ENCODE measurements at regions of chrX and their contacts with region 1.

Region 1: GRCh38 chrX:135476378-135476777 is 44.1 kb upstream of the INTS6L start:
- DNase-seq: no peak
- H3K4me3 ChIP-seq: no peak overlapping the region
- H3K27ac ChIP-seq: no peak overlapping the region
- H3K4me1 ChIP-seq: no peaks in the 10 kb centered on the region
- H3K27me3 ChIP-seq: no peaks in the 10 kb centered on the region
- CTCF ChIP-seq: no peak
- EP300 ChIP-seq: no peak
- POLR2A ChIP-seq: no peak
- RAD21 ChIP-seq: no peak

Region 2: DNA sequence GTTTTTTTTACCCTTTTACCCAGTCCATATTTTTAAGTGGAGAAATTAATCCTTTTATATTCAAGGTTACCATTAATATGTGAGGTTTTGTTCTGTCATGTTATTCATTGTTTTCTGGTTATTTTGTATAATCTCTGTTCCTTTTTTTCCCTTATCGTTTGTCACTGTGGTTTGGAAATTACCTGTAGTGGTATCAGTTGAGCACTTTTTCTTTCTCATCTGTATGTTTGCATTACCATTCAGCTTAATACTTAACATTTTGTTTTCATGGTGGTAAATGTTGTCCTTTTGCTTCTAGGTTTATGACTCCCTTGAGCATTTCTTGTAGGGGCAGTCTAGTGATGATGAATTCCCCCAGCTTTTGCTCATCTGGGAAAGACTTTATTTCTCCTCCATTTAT is 160.5 kb before region 1 on chrX:
- CTCF ChIA-PET with region 1: no interaction called
- POLR2A ChIA-PET with region 1: no interaction called
- DNase-seq: no peak
- H3K4me3 ChIP-seq: no peak overlapping the region
- H3K27ac ChIP-seq: no peak overlapping the region
- H3K4me1 ChIP-seq: no peaks in the 10 kb centered on the region
- H3K27me3 ChIP-seq: no peaks in the 10 kb centered on the region
- CTCF ChIP-seq: no peak
- EP300 ChIP-seq: no peak
- POLR2A ChIP-seq: no peak
- RAD21 ChIP-seq: no peak

Region 3: GRCh38 chrX:135327299-135327698 is 149.1 kb before region 1 on chrX:
- CTCF ChIA-PET with region 1: no interaction called
- POLR2A ChIA-PET with region 1: no interaction called
- DNase-seq: no peak
- H3K4me3 ChIP-seq: no peak overlapping the region
- H3K27ac ChIP-seq: no peak overlapping the region
- H3K4me1 ChIP-seq: peaks cover 0 to 5% (median under 1%) of the 10 kb centered on the region in 4 experiments; a peak in 2 of 7 replicates
- H3K27me3 ChIP-seq: no peaks in the 10 kb centered on the region
- CTCF ChIP-seq: no peak
- EP300 ChIP-seq: no peak
- POLR2A ChIP-seq: no peak
- RAD21 ChIP-seq: no peak

Region 4: DNA sequence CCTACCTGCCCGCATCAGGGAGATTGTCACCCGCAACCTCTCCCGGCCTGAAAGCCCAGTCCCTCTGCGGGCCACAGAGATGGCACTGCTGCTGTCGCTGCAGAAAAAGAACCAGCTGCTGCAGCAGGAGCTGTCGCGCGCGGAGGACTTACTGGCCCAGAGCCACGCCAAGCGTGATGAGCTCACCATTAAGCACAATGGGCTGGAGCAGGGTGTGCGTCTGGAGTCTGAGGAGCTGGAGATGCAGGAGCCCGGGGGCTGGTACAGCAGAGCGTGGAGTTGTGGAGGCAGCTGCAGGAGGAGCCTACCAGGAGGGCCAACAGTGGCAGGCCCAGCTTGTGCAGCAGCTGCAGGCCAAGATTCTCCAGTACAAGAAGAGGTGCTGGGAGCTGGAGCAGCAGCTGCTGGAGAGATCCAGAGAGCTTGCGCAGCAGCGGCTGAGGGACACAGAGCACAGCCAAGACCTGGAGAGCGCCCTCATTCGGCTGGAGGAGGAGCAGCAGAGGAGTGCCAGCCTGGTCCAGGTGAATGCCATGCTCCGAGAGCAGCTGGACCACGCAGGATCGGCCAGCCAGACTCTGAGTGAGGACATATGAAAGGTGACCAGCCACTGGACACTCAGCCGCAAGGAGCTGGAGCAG is 43.4 kb before region 1 on chrX:
- CTCF ChIA-PET with region 1: interaction called, 12 read pairs
- POLR2A ChIA-PET with region 1: no interaction called
- DNase-seq: no peak
- H3K4me3 ChIP-seq: no peak overlapping the region
- H3K27ac ChIP-seq: no peak overlapping the region
- H3K4me1 ChIP-seq: no peaks in the 10 kb centered on the region; a peak in 2 of 7 replicates
- H3K27me3 ChIP-seq: no peaks in the 10 kb centered on the region
- CTCF ChIP-seq: peak in 1 of 3 experiments; percentile 33; a peak in 1 of 4 replicates
- EP300 ChIP-seq: no peak
- POLR2A ChIP-seq: no peak
- RAD21 ChIP-seq: peak in 1 of 2 experiments; percentile 23; a peak in 1 of 4 replicates